ENCODE measurements at regions of chr9 and their contacts with region 1.

Region 1: GRCh38 chr9:2014696-2015580 is at the start of gene SMARCA2:
- DNase-seq: peak; percentile 97
- ATAC-seq: peak; percentile 87
- H3K4me3 Mint-ChIP-seq: peak within 1 kb of the TSS; percentile 100
- H3K27ac Mint-ChIP-seq: peak within 1 kb of the TSS; percentile 99
- H3K4me1 Mint-ChIP-seq: peaks cover 40% of the 10 kb centered on the region
- H3K27me3 Mint-ChIP-seq: peaks cover 4% of the 10 kb centered on the region
- total RNA-seq, gene SMARCA2: 243 to 245 TPM

Region 2: DNA sequence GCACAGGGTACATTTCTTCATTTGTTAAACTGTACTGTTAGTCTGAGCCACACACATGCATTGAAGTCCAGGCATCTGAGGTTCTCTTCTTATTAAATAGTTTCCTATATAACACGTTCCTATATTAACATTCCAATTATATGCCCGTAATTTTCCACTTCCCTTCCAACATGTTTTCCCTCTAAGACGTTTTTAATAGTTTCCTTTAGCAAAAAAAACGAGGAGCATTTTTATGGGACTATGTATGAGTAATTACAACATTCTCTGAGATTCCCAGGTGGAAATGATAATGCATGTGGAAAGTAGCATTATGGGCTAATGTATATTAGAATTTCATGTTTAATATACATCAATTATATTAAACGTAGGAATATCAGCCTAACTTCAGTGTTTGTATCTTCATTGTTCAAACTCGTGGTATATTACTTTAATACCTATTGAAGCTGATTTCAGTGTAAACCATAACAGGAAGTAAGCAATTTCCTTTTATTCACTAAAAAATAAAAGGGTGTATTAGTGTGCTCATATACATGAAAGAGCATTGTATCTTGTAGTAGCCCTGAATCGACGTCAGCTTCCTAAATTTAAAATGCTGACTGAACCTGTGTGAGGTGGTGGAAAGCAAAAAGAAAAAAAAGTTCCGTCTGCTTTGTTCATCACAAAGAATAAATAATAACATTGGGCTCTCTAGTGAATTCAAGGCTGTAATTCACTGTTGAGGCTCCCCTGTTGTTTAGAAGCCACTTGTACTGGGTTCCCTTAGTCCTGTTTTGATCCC is 11.5 kb after region 1 on chr9:
- CTCF ChIA-PET with region 1: no interaction called
- POLR2A ChIA-PET with region 1: interaction called, 12 read pairs
- DNase-seq: no peak
- ATAC-seq: peak; percentile 25
- H3K4me3 Mint-ChIP-seq: no peak overlapping the region
- H3K27ac Mint-ChIP-seq: peak overlapping the region; percentile 22
- H3K4me1 Mint-ChIP-seq: peaks cover 86% of the 10 kb centered on the region
- H3K27me3 Mint-ChIP-seq: no peaks in the 10 kb centered on the region

Region 3: DNA sequence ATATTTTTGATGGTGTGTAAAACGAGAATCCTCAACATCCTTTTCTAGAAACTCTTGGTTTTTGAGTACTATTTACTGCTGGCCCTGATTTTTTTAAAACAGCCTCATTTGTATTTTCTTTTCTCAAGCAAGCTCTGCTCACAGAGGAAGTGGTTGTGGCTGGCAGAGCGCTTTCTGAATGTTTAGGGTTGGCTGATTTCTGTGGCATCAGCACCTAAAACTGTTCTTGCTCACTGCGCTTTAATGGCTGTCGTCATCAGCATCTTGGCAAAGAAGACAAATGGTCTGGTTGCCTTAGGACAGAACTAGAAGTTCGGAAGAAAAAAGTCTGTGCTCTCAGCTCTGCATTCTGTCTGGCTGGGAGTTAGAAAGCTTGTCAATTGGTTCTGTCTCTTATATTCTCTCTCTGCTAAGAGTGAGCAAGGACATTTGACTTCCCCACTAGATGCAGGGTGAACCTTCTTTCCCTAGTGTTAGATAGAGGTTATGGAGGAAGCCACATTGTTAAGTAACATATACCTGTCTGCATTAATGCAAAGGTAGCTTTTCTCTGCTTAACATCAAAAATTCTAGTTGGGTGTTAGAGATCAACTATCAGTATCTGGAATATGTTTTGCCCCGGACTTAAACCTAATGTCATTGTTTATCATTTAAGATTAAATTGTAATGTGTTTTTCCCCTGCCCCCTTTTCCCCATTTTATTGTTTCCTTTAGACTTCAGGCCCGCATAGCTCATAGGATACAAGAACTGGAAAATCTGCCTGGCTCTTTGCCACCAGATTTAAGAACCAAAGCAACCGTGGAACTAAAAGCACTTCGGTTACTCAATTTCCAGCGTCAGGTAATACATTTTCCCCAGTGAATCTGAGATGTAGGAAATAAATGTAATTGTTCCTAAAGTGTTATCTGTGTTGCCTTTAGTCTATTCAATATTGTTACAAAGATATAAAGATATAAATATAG is 39.2 kb after region 1 on chr9:
- CTCF ChIA-PET with region 1: interaction called, 5 read pairs
- POLR2A ChIA-PET with region 1: interaction called, 39 read pairs
- DNase-seq: peak; percentile 88
- ATAC-seq: peak; percentile 98
- H3K4me3 Mint-ChIP-seq: peak overlapping the region; percentile 51
- H3K27ac Mint-ChIP-seq: peak overlapping the region; percentile 90
- H3K4me1 Mint-ChIP-seq: peaks cover 40% of the 10 kb centered on the region
- H3K27me3 Mint-ChIP-seq: no peaks in the 10 kb centered on the region